CD4-positive, alpha-beta T cell (primary cell): ENCODE measurements at regions of chr6 and their contacts with region 1.

Region 1: GRCh38 chr6:24520929-24521546 is 26.3 kb downstream of the ALDH5A1 start:
- DNase-seq: peak in 11 of 14 experiments; percentile 7 to 54 (median 33)
- ATAC-seq: peak; percentile 43
- H3K4me3 ChIP-seq: no peak overlapping the region
- H3K4me3 Mint-ChIP-seq: no peak overlapping the region
- H3K27ac ChIP-seq: no peak overlapping the region
- H3K27ac Mint-ChIP-seq: no peak overlapping the region
- H3K4me1 ChIP-seq: no peaks in the 10 kb centered on the region
- H3K4me1 Mint-ChIP-seq: no peaks in the 10 kb centered on the region
- H3K27me3 ChIP-seq: no peaks in the 10 kb centered on the region
- H3K27me3 Mint-ChIP-seq: no peaks in the 10 kb centered on the region
- CTCF ChIP-seq: peak; percentile 59

Region 2: DNA sequence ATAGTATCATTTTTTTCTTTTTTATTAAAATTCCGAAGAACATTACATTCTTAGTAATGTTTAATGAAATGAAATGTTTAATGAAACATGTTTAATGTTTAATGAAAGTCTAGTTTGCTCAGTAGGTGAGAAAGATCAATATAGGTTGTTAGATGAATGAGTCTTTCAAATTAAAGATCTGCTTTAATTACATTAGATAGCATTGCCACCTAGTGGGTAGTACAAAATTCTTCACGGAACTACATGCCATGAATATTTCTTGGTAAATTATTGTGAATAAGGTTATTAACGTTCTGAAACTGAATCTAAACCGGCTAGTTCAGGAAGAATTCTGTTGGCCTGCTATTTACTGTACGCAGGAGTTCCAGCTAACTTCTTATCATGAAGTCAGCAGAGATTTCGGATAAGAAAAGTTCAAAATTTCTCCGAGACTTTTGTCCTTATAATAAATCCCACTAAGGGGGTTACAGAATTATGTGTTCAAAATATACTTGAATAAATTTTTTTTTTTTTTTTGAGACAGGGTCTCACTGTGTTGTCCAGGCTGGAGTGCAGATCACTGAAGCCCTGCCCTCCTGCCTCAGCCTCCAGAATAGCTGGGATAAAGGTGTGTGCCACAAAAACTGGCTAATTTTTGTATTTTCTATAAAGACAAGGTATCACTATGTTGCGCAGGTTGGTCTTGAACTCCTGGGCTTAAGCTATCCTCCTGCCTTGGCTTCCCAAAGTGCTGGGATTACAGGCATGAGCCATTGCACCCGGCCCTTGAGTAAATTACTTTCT is 245.8 kb after region 1 on chr6:
- CTCF ChIA-PET with region 1: no interaction called
- POLR2A ChIA-PET with region 1: no interaction called
- intact Hi-C with region 1: loop called in 1 of 2 experiments (anchors 5 kb)
- DNase-seq: peak in 3 of 14 experiments; percentile 43 to 58 (median 55)
- ATAC-seq: peak; percentile 83
- H3K4me3 ChIP-seq: no peak overlapping the region
- H3K4me3 Mint-ChIP-seq: no peak overlapping the region
- H3K27ac ChIP-seq: no peak overlapping the region
- H3K27ac Mint-ChIP-seq: no peak overlapping the region
- H3K4me1 ChIP-seq: no peaks in the 10 kb centered on the region
- H3K4me1 Mint-ChIP-seq: no peaks in the 10 kb centered on the region
- H3K27me3 ChIP-seq: no peaks in the 10 kb centered on the region
- H3K27me3 Mint-ChIP-seq: no peaks in the 10 kb centered on the region
- CTCF ChIP-seq: peak; percentile 69